Aorta (tissue), 5 donors: ENCODE measurements at regions of chr3 and their contacts with region 1.

Region 1: GRCh38 chr3:40877631-40878463 is 321.5 kb upstream of the CTNNB1 start:
- DNase-seq: peak; percentile 90 to 91
- ATAC-seq: peak; percentile 93
- H3K4me3 ChIP-seq: peak overlapping the region in 1 of 2 donors; percentile 27
- H3K27ac ChIP-seq: peak overlapping the region in 1 of 2 donors; percentile 75
- H3K4me1 ChIP-seq: peaks cover 0 to 5% of the 10 kb centered on the region in 2 donors
- H3K27me3 ChIP-seq: no peaks in the 10 kb centered on the region

Region 2: GRCh38 chr3:40690749-40691451 is 186.9 kb before region 1 on chr3:
- intact Hi-C with region 1: loop called (anchors 1 to 5 kb)
- DNase-seq: peak; percentile 85 to 91
- ATAC-seq: peak; percentile 93
- H3K4me3 ChIP-seq: no peak overlapping the region
- H3K27ac ChIP-seq: peak overlapping the region in 1 of 2 donors; percentile 10
- H3K4me1 ChIP-seq: peaks cover 0 to 4% of the 10 kb centered on the region in 2 donors
- H3K27me3 ChIP-seq: no peaks in the 10 kb centered on the region

Region 3: DNA sequence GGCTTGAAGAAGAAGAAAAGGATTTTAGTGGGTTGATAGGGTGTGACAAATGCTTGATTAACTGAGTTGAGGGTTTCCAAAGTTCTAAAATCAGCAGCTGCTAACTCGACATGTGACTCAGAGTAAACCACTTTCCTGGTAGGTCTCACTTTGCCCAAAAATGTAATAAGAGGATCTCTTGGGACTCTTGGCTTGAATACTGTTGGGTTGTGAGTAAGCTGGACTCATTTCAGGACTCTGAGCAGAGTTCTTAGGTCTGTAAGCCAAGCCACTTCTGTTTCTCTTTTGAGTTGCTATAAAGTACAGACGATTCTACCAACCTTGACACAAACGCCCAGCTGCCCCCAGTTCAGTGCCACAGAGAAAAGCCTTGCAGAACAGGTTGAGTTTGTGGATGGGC is 112.0 kb before region 1 on chr3:
- intact Hi-C with region 1: loop called (anchors 5 kb)
- DNase-seq: no peak
- ATAC-seq: peak; percentile 88
- H3K4me3 ChIP-seq: no peak overlapping the region
- H3K27ac ChIP-seq: peak overlapping the region in 1 of 2 donors; percentile 1
- H3K4me1 ChIP-seq: peaks cover 2 to 5% of the 10 kb centered on the region in 2 donors
- H3K27me3 ChIP-seq: no peaks in the 10 kb centered on the region

Region 4: DNA sequence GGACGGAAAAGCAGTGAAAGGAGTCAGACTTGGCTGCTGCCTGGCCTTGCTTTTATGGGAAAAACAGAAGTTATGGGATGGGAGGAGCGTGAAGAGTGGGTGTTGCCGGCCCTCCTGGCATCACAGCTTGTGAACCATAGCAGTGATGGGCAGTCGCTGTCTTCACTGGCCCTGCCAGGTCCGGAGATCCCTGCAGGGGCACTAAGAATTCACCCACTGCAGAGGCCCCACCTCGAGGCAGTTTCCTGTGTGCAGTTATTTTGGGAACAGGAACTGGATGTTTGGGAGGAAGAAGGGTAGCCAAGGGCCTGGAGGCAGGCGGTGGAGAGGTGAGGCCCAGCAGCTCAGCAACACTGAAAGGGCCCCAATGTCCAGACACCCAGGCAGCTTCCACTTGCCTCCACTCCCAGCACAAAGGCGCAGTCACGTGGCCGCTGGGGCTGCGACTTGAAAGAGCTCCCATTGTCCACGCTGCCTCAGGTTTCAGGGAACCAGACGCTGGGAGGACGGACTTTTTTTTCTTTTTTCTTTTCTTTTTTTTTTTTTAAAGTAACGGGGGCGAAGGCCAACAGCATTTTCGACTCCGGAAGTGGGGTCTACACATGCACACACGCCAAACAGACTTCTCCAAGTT is 97.4 kb before region 1 on chr3:
- intact Hi-C with region 1: loop called in 1 of 2 experiments (anchors 2 kb)
- DNase-seq: peak; percentile 88 to 92
- ATAC-seq: peak; percentile 90
- H3K4me3 ChIP-seq: no peak overlapping the region
- H3K27ac ChIP-seq: peak overlapping the region; percentile 31 to 84
- H3K4me1 ChIP-seq: no peaks in the 10 kb centered on the region
- H3K27me3 ChIP-seq: no peaks in the 10 kb centered on the region

Region 5: DNA sequence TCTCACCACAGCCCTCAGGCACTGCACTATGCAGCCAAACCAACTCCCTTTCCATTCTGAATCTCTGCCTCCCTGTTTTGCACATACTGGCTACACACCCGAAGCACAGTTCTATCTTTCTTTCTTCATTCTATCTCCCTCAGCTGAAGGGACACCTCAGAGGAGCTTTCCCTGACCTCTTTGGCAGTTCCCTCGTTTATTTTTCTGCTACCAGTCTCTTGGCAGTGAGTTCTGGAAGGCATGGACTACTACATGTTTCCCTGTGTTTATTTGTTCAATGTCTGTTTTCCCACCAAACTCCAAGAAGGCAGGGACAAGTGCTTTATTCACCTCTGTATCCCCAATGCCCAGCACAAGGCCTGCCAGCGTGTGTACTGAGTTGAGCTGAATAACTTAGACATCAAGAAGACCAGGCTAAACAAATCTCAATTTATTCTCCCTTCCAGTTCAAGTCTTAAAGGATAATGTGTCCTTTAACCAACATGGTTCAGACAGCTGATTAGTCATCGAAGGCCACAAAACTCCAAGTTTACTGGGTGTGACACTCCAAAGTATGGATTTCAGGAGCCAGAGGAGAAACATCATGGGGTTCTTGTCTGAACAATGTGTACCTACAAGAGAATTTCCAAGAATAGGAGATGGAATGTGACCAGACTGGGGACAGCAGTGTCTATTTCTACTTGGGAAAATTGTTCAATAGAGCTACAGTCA is 61.3 kb after region 1 on chr3:
- intact Hi-C with region 1: no loop called
- DNase-seq: no peak
- ATAC-seq: peak; percentile 48
- H3K4me3 ChIP-seq: no peak overlapping the region
- H3K27ac ChIP-seq: peak overlapping the region in 1 of 2 donors; percentile 44
- H3K4me1 ChIP-seq: peaks cover 3 to 5% of the 10 kb centered on the region in 2 donors
- H3K27me3 ChIP-seq: no peaks in the 10 kb centered on the region

Region 6: DNA sequence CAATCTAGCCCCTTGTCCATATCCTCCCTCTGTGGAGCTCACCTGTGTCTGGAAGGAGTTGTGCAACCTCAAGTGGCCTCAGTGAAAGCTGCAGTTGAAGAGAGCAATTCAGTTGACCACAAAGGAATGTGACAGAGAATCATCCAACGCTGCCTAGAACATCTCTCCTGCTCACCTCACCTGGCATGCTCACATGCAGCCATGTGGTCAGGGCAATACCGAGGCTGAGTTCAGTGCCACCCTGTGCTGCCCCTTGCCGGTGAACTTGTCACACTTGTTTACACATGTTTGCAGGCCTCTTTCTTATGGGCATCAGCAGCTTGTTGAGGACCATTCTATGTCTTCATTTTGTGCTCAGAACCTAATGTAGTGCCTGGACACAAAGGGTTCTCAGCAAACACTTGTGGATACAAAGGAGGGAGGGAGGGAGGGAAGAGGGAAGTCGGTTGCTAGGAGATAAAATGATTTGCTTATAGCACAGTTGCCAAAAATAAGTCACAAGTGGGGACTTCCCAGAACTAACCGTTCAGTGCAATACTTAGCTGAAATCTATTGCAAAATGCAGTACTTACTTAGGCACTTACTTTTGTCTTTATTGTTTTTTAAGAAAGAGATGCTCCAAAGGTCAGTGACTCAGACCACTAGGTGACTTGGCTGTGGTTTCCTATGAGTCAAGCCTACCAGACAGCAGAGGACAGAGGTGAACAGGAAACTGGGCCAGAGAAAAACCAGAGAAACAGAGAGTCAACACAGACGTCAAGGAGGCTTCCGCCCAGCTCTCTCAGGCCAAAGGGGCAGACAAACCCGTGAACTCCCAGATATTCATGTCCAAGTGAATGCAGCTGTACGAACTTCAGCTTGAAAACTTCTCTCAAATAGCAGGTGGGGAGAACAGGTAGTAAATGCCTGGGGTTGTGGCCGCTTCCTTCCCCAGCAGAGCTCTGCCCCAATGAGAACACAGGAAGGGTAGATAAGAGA is 93.6 kb after region 1 on chr3:
- intact Hi-C with region 1: loop called in 1 of 2 experiments (anchors 10 kb)
- DNase-seq: peak; percentile 80 to 82
- ATAC-seq: peak; percentile 92
- H3K4me3 ChIP-seq: no peak overlapping the region
- H3K27ac ChIP-seq: peak overlapping the region in 1 of 2 donors; percentile 12
- H3K4me1 ChIP-seq: no peaks in the 10 kb centered on the region
- H3K27me3 ChIP-seq: no peaks in the 10 kb centered on the region

Region 7: DNA sequence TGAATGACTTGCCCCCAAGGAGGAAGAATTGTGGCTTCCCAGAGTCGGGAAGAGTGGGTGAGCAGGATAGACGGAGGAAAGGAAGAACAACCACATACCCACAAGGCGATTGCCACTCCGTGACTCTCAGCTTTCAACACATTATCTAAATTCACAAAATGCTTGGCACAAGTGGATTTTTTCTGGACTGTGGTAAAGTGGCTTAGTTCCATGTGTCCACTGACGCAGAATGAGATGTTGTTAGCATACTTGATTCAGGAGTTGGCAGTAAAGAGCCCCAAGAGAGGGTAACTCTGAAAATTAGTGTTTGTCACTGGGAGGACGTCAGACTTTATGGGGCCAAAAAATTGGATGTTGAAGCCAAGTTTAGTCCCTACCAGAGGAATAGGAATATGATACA is 122.6 kb after region 1 on chr3:
- intact Hi-C with region 1: loop called (anchors 1 to 10 kb)
- DNase-seq: no peak
- ATAC-seq: peak; percentile 84
- H3K4me3 ChIP-seq: no peak overlapping the region
- H3K27ac ChIP-seq: peak overlapping the region in 1 of 2 donors; percentile 39
- H3K4me1 ChIP-seq: peaks cover 0 to 5% of the 10 kb centered on the region in 2 donors
- H3K27me3 ChIP-seq: no peaks in the 10 kb centered on the region

Region 8: GRCh38 chr3:41198950-41199865 is 321.4 kb after region 1 on chr3 and contains the start of gene CTNNB1:
- intact Hi-C with region 1: loop called in 1 of 2 experiments (anchors 1 kb)
- DNase-seq: peak; percentile 95 to 97
- ATAC-seq: peak; percentile 96
- H3K4me3 ChIP-seq: peak within 1 kb of the TSS; percentile 50 to 98
- H3K27ac ChIP-seq: peak within 1 kb of the TSS; percentile 62 to 72
- H3K4me1 ChIP-seq: peaks cover 1 to 3% of the 10 kb centered on the region in 2 donors
- H3K27me3 ChIP-seq: no peaks in the 10 kb centered on the region
- total RNA-seq, gene CTNNB1: 306 to 336 TPM